GM10248 (cell line): ENCODE measurements at regions of chr11 and their contacts with region 1.

Region 1: GRCh38 chr11:57456960-57457642 is 3.2 kb upstream of the RTN4RL2 start:
- DNase-seq: peak; percentile 83
- CTCF ChIP-seq: peak; percentile 100

Region 2: DNA sequence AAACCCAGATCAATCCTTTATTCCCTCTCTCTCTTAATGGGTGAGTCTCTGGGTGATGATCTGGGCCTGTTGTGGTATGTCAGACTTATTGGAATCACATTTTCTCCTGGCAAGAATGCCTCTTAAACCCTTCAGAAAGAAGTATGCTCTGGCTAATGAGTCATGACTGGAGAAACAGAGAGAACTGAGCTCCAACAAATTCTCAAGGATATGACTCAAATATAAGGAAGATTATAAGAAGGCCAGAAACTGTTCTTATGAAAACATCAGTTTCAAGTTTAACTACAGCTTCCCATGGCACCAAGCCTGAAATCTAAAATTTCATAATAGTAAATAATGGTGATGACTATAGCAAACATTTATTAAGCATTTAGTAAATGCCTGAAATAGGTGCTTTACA is 384.5 kb before region 1 on chr11:
- CTCF ChIA-PET with region 1: no interaction called
- POLR2A ChIA-PET with region 1: no interaction called
- DNase-seq: no peak
- CTCF ChIP-seq: no peak

Region 3: GRCh38 chr11:57345555-57346211 is 111.4 kb before region 1 on chr11:
- CTCF ChIA-PET with region 1: interaction called, 17 read pairs
- POLR2A ChIA-PET with region 1: no interaction called
- DNase-seq: peak; percentile 80
- CTCF ChIP-seq: peak; percentile 80

Region 4: DNA sequence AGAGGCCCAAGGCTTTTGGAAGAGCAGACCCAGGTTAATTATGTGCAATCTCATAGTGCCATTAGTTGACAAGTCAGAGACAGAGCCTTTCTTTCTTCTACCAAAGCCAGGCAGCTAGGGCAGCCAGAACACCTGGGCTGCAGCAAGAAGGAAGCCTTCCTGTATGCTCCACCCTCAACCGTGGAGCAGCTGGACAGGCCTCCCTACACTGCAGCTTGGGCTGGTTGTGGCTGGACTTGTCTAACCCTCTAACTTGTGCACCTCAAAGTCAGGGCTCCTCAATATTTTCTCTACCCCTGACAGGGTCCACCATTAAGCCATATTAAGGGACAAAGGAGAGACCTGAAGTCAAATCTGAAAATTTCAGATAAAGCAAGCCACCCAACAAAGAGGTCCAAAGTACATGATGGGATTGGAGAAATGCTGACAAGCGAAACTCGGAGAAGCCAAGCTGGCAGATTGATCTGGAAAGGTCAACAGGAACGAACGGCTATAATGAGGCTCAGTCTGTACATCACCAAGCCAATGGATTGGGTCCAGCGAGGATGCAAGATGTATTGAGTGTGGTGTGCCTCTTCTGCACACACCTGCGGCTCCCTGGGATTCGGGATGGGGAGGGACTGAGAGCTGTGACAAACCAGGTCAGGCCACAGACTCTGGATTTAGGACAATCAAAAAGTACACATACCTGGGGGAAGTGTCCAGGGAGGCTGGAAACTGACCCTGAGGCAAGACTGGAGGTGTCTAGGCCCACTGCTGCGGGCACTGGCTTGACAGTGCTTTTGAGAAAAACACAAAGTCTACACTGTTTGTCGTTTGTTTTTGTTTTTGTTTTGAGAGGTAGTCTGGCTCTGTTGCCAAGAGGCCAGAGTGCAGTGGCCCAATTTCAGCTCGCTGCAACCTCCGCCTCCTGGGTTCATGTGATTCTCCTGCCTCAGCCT is 18.5 kb before region 1 on chr11:
- CTCF ChIA-PET with region 1: interaction called, 160 read pairs
- POLR2A ChIA-PET with region 1: no interaction called
- DNase-seq: no peak
- CTCF ChIP-seq: no peak

Region 5: DNA sequence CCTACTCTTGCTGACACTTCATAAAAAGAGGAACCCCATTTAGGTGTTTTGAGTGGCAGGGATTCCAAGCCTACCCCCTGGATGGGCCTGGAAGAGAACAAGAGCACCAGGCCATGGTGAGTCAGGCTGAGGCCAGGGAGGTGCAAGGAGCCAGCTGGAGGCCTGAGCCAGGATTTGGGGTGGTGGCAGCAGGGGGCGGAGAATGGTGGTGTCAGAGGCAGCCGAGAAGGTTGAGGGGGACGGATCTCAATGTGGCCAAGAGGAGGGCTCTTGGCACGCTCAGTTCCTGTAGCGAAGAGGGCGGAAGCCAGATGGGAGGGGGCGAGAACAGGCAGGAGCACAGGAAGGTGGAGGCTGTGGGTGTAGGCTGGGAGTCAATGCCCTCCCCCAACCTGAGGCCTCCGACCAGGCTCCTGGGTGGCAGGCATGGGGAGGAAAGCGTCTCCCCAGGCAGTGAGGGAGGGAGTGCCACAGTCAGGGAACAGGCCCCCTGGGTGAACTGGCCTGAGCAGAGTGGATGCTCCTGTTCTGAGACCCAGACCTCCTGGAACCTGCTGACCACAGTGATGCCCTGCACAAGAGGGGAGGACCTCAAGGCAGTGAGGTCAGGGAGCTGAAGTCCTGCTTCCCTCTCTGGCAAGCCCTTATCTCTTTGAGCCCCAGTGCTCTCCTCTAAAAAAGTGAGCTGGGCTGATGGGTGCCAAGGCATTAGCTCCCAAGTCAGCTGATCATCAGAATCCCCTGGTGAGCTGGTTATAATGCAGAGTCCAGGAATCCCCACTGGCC is 17.1 kb after region 1 on chr11:
- CTCF ChIA-PET with region 1: interaction called, 200 read pairs
- POLR2A ChIA-PET with region 1: interaction called, 3 read pairs
- DNase-seq: no peak
- CTCF ChIP-seq: no peak

Region 6: DNA sequence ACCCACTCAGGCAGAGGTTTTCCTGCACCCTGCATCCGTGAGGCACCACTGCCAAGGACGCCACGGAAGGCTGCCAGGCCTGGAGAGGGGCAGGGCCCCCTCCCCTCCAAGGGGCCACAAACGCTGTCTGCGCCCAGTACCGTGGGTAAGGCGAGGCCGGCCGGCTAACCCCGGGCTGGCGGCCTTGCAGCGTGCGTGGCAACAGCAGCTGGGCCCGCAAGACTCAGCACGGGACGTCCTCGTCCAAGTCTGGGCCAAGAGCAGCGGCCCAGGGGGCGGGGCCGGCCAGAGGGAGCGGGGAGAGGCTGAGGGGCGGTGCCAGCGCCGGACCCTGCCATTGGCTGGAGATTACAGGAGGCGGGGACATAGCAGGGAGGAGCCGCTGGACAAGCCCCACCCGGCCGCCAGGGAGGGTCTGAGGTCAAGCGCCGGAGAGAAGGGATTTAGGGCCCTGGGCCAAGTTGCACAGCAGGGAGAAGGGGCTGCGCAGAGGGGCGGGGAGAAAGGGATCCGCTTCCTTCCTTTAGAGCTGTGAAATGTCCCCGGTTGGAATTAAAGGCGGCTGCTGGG is 42.4 kb after region 1 on chr11:
- CTCF ChIA-PET with region 1: interaction called, 40 read pairs
- POLR2A ChIA-PET with region 1: no interaction called
- DNase-seq: peak; percentile 81
- CTCF ChIP-seq: no peak

Region 7: GRCh38 chr11:57530596-57531507 is 73.8 kb after region 1 on chr11 and contains the start of gene TIMM10:
- CTCF ChIA-PET with region 1: interaction called, 156 read pairs
- POLR2A ChIA-PET with region 1: no interaction called
- DNase-seq: peak; percentile 92
- CTCF ChIP-seq: no peak

Region 8: DNA sequence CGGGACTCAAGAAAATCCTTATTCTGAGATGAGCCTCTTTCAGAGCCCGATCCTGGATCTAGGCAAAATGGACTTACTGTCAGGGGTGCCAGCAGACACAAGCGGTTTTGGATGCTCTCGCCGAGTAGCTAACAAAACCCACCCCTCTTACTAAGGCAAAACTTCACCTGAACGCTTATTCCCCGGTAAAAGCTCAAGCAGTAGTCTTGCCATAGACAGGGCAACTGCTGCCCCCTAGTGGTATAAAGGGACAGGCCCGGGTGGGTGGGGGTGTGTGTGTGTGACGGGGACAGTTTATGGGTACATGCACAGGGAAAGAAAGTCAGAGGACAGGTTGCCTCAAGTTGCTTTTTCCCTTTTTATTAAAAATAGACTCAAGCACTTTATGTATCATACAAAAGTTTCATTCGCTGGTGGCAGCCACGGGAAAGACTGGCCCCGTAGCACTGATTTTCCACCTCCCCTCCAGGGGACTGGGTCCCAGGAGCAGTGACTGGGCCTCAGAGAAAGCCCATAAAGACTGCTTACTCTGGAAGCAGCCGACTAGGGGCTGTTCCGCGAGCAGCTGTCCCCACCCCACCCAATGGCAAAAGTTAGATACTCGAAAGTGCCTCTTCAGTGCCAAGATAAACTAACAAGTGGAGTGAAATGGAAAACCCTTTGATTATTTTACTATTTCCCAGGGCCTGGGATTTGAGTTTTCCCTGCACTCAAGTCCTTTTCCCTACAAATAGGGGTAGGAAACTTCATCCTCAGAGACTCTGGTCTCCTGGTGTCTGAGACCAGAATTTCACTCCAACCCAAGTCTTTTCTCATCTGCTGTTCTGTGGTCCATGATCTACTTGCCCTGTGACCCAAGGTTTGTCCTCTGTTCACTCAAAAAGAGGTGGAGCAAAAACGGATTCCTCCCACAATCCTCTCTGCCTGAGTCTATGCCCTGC is 187.9 kb after region 1 on chr11:
- CTCF ChIA-PET with region 1: interaction called, 85 read pairs
- POLR2A ChIA-PET with region 1: interaction called, 5 read pairs
- DNase-seq: peak; percentile 82
- CTCF ChIP-seq: peak; percentile 65